Spleen (tissue), 13 donors: ENCODE measurements at regions of chr10 and their contacts with region 1.

Region 1: DNA sequence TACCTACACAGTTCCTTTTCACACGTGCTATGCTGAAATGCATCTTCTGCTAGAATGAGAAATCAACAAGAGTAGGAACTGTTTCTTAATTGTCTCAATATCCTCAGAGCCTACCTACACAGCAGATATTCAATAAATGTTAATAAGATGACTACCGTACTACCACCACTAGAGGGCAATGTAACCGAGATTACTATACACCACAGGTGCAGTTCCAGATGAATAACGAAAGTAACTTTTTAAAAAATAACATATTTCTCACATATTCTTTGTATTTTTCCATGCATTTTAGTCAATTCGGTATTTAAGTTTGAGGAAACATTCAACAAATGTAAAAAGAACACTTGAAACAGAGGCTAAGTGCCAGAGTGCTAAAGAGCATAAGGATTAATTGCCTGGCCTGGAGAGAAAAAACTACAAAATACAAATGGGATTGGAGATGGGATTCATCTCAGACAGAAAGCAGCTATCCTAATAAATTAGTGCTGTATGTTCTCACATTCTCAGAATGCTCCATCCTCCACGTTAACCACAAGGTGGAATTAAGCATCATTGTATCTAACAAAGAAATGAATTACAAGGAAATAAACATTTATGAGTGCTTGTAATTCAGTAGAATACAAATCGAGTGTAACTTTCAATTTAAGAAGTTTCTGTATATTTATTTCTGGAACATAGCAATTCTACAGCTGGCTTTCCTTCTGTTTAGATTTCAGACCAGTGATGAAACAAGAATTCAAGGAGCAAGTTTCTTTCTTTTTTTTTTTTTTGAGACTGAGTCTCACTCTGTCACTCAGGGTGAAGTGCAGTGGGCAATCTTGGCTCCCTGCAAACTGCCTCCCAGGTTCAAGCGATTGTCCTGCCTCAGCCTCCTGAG is 20.3 kb upstream of the HECTD2 start:
- DNase-seq: no peak
- H3K4me3 ChIP-seq: no peak overlapping the region
- H3K27ac ChIP-seq: no peak overlapping the region
- H3K4me1 ChIP-seq: peaks cover 3 to 6% (median 4%) of the 10 kb centered on the region in 6 donors
- H3K27me3 ChIP-seq: peaks cover 0 to 12% (median 0%) of the 10 kb centered on the region in 7 donors
- CTCF ChIP-seq: peak in 10 of 11 experiments; percentile 38 to 73 (median 62)
- POLR2A ChIP-seq: no peak

Region 2: DNA sequence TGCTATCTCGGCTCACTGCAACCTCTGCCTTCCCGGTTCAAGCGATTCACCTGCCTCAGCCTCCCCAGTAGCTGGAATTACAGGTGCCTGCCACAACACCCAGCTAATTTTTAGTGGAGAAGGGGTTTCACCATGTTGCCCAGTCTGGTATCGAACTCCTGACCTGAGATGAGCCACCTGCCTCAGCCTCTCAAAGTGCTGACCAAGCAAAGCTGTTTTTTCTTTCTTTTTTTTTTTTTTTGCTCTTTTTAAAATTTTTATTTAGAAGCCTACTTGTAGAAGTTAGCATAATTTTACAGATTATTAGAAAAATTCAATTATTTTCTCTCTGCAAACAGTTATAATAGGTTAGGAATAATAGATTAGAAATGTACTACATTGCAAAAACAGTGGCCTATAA is 520.6 kb after region 1 on chr10:
- intact Hi-C with region 1: loop called (anchors 10 kb)
- DNase-seq: no peak
- H3K4me3 ChIP-seq: no peak overlapping the region
- H3K27ac ChIP-seq: no peak overlapping the region
- H3K4me1 ChIP-seq: peaks cover 12 to 36% (median 22%) of the 10 kb centered on the region in 6 donors
- H3K27me3 ChIP-seq: no peaks in the 10 kb centered on the region
- CTCF ChIP-seq: no peak
- POLR2A ChIP-seq: no peak